ENCODE measurements at regions of chr16 and their contacts with region 1.

Region 1: GRCh38 chr16:28218104-28218503 is 6.3 kb upstream of the XPO6 start:
- H3K4me3 Mint-ChIP-seq: no peak overlapping the region
- H3K27ac Mint-ChIP-seq: no peak overlapping the region
- H3K4me1 Mint-ChIP-seq: no peaks in the 10 kb centered on the region
- H3K27me3 Mint-ChIP-seq: no peaks in the 10 kb centered on the region

Region 2: GRCh38 chr16:27972500-27972899 is 245.6 kb before region 1 on chr16:
- intact Hi-C with region 1: loop called (anchors 5 kb)
- H3K4me3 Mint-ChIP-seq: no peak overlapping the region
- H3K27ac Mint-ChIP-seq: no peak overlapping the region
- H3K4me1 Mint-ChIP-seq: no peaks in the 10 kb centered on the region
- H3K27me3 Mint-ChIP-seq: no peaks in the 10 kb centered on the region

Region 3: DNA sequence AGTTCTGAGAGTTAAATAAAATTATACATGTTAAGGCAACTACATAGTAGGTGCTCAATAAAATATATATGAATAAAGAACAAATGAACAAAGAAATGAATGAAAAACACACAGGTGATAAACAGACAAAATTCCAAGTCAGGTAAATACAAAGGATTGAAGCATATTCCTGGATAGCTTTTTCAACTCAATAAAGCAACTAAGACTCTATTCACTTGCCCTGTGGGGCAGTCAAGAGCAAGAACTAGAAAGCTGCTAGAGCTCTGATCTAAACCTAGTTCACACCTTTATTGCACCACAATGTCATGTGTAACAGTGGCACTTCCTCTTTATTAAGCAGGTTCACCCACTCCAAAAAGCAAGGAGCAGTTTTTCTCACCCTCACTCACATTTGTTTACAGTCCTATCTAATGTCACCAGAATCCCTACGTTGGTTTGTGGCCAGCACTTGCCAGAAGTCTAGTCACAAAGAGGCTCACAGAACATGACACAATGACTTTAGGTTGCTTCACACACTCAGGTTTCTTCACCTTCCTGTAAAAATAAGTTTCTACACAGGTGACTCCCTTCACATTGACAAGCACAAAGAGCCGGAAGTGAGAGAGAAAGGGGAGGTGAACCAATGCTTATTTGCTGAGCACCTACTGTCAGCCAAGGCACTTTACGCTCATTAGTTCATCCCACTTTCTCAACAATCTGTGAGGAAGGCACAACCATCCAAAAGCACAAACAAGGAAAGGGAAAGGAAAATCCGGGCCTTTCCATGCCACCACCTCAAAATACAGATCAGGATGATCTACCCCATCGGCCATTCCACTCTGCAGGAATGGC is 77.1 kb before region 1 on chr16:
- intact Hi-C with region 1: loop called (anchors 5 kb)
- H3K4me3 Mint-ChIP-seq: no peak overlapping the region
- H3K27ac Mint-ChIP-seq: peak overlapping the region; percentile 12
- H3K4me1 Mint-ChIP-seq: peaks cover 31% of the 10 kb centered on the region
- H3K27me3 Mint-ChIP-seq: no peaks in the 10 kb centered on the region

Measured in dendritic cell treated with granulocyte-macrophage colony-stimulating factor and Interleukin-4, amounts not matched to agents 40 ng/mL and 50 ng/mL, for 4 days (primary cell).